ENCODE measurements at regions of chr5 and their contacts with region 1.

Region 1: GRCh38 chr5:176660860-176661641 is 13.8 kb downstream of the TSPAN17 start:
- DNase-seq: peak; percentile 82
- H3K4me3 Mint-ChIP-seq: no peak overlapping the region
- H3K27ac Mint-ChIP-seq: no peak overlapping the region
- H3K4me1 Mint-ChIP-seq: peaks cover 24% of the 10 kb centered on the region
- H3K27me3 Mint-ChIP-seq: peaks cover 8% of the 10 kb centered on the region

Region 2: GRCh38 chr5:175885813-175886212 is 775.2 kb before region 1 on chr5:
- CTCF ChIA-PET with region 1: no interaction called
- intact Hi-C with region 1: no loop called
- DNase-seq: no peak
- H3K4me3 Mint-ChIP-seq: no peak overlapping the region
- H3K27ac Mint-ChIP-seq: no peak overlapping the region
- H3K4me1 Mint-ChIP-seq: no peaks in the 10 kb centered on the region
- H3K27me3 Mint-ChIP-seq: peaks cover 4% of the 10 kb centered on the region

Region 3: GRCh38 chr5:176629853-176630712 is 31.0 kb before region 1 on chr5 and contains the starts of genes EIF4E1B and SNCB:
- CTCF ChIA-PET with region 1: interaction called, 14 read pairs
- intact Hi-C with region 1: no loop called
- DNase-seq: peak; percentile 59
- H3K4me3 Mint-ChIP-seq: peak within 1 kb of the TSS; percentile 46
- H3K27ac Mint-ChIP-seq: no peak within 1 kb of the TSS
- H3K4me1 Mint-ChIP-seq: peaks cover 12% of the 10 kb centered on the region
- H3K27me3 Mint-ChIP-seq: peaks cover 65% of the 10 kb centered on the region
- total RNA-seq, gene EIF4E1B: not detected
- total RNA-seq, gene SNCB: not detected

Region 4: GRCh38 chr5:176682016-176682531 is 21.0 kb after region 1 on chr5:
- CTCF ChIA-PET with region 1: interaction called, 12 read pairs
- intact Hi-C with region 1: no loop called
- DNase-seq: no peak
- H3K4me3 Mint-ChIP-seq: no peak overlapping the region
- H3K27ac Mint-ChIP-seq: no peak overlapping the region
- H3K4me1 Mint-ChIP-seq: no peaks in the 10 kb centered on the region
- H3K27me3 Mint-ChIP-seq: peaks cover 48% of the 10 kb centered on the region

Region 5: DNA sequence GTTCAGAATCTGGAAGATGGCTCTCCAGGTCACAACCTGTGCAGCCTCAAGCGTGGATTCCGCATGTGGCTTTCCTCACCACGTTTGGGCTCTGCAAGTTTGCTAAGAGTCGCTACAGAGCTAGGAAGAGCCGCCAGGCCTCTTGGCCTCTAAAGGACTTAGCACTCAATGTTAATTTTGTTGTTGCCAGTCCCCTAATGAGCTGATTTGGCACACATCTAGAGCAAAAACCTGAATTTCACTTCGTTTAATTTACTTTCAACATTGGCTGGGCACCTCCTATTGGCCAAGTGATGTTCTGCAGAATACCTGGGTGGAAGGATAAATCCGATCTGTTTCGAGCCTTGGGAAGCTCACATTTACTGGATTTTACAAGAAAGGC is 83.5 kb after region 1 on chr5:
- CTCF ChIA-PET with region 1: interaction called, 8 read pairs
- intact Hi-C with region 1: loop called (anchors 1 kb)
- DNase-seq: no peak
- H3K4me3 Mint-ChIP-seq: no peak overlapping the region
- H3K27ac Mint-ChIP-seq: no peak overlapping the region
- H3K4me1 Mint-ChIP-seq: peaks cover 37% of the 10 kb centered on the region
- H3K27me3 Mint-ChIP-seq: peaks cover 78% of the 10 kb centered on the region

Region 6: DNA sequence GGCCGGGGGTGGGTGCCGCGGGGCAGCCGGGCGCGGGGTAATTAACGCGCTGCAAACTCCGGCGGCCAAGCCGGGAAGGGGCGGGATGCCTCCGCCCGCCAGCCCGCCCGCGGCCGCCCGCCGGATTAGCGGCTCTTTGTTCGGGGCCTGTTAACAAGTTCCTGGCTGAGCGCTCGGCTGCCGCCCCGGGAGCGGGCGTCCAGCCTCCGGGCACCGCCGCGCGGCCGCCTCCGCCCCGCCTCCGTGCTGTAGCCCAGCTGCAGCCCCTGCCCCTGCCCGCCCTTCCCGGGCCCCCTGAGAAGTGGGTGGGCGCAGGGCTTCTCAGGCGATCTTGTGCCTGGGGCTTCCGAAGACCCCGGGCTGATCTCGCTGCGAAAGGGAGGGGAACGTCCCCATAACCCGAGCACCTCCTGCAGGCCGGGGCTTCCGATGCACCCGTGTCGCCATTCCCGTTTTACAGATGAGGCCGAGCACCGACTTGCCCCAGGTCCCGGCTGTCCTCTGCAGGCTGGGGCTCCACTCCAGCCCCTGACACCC is 156.9 kb after region 1 on chr5:
- CTCF ChIA-PET with region 1: interaction called, 12 read pairs
- intact Hi-C with region 1: loop called (anchors 5 kb)
- DNase-seq: peak; percentile 36
- H3K4me3 Mint-ChIP-seq: peak overlapping the region; percentile 27
- H3K27ac Mint-ChIP-seq: no peak overlapping the region
- H3K4me1 Mint-ChIP-seq: peaks cover 10% of the 10 kb centered on the region
- H3K27me3 Mint-ChIP-seq: peaks cover 60% of the 10 kb centered on the region

Region 7: DNA sequence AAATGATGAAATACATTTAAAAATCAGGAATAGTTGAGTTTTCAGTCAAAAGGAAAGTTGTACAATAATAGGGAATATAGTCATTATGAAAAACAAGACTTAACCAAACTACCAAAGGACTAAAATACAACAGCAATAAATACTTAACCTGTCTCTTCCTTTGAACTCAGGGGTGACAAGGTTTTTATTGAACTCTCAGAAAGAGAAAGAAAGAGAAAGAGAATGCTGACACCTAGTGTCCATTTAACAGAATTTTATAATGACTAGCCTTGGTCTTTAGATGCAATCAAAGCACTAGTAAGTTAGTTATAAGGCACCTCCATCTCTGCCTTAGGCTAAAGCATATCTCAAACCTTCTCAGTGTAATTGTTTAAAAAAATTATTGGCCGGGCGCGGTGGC is 298.0 kb after region 1 on chr5:
- CTCF ChIA-PET with region 1: interaction called, 15 read pairs
- intact Hi-C with region 1: loop called (anchors 2 kb)
- DNase-seq: no peak
- H3K4me3 Mint-ChIP-seq: no peak overlapping the region
- H3K27ac Mint-ChIP-seq: no peak overlapping the region
- H3K4me1 Mint-ChIP-seq: peaks cover 4% of the 10 kb centered on the region
- H3K27me3 Mint-ChIP-seq: no peaks in the 10 kb centered on the region

Region 8: GRCh38 chr5:177113566-177114424 is 452.7 kb after region 1 on chr5:
- CTCF ChIA-PET with region 1: interaction called, 29 read pairs
- intact Hi-C with region 1: loop called (anchors 1 kb)
- DNase-seq: peak; percentile 89
- H3K4me3 Mint-ChIP-seq: no peak overlapping the region
- H3K27ac Mint-ChIP-seq: no peak overlapping the region
- H3K4me1 Mint-ChIP-seq: peaks cover 20% of the 10 kb centered on the region
- H3K27me3 Mint-ChIP-seq: no peaks in the 10 kb centered on the region